PC-3 (cell line): ENCODE measurements at regions of chr5 and their contacts with region 1.

Region 1: GRCh38 chr5:119411935-119412602 is 40.2 kb upstream of the HSD17B4 start:
- DNase-seq: peak; percentile 78
- ATAC-seq: peak; percentile 89
- H3K4me3 ChIP-seq: peak overlapping the region; percentile 68
- H3K27ac ChIP-seq: peak overlapping the region; percentile 69
- H3K4me1 ChIP-seq: peaks cover 20% of the 10 kb centered on the region
- H3K27me3 ChIP-seq: no peaks in the 10 kb centered on the region
- CTCF ChIP-seq: peak; percentile 92

Region 2: GRCh38 chr5:118987988-118988865 is 423.8 kb before region 1 on chr5 and contains the start of gene DTWD2:
- CTCF ChIA-PET with region 1: interaction called, 4 read pairs
- POLR2A ChIA-PET with region 1: no interaction called
- intact Hi-C with region 1: loop called (anchors 1 kb)
- DNase-seq: peak; percentile 94
- ATAC-seq: peak; percentile 96
- H3K4me3 ChIP-seq: peak within 1 kb of the TSS; percentile 82
- H3K27ac ChIP-seq: peak within 1 kb of the TSS; percentile 73
- H3K4me1 ChIP-seq: peaks cover 24% of the 10 kb centered on the region
- H3K27me3 ChIP-seq: no peaks in the 10 kb centered on the region
- CTCF ChIP-seq: peak; percentile 79
- total RNA-seq, gene DTWD2: 16.5 and 24.4 TPM in 2 replicates

Region 3: GRCh38 chr5:119037501-119038215 is 374.4 kb before region 1 on chr5:
- CTCF ChIA-PET with region 1: no interaction called
- POLR2A ChIA-PET with region 1: no interaction called
- intact Hi-C with region 1: no loop called
- DNase-seq: peak; percentile 54
- ATAC-seq: peak; percentile 58
- H3K4me3 ChIP-seq: no peak overlapping the region
- H3K27ac ChIP-seq: peak overlapping the region; percentile 51
- H3K4me1 ChIP-seq: peaks cover 19% of the 10 kb centered on the region
- H3K27me3 ChIP-seq: no peaks in the 10 kb centered on the region
- CTCF ChIP-seq: no peak

Region 4: GRCh38 chr5:119070828-119071572 is 341.1 kb before region 1 on chr5 and contains the start of gene DMXL1:
- CTCF ChIA-PET with region 1: interaction called, 4 read pairs
- POLR2A ChIA-PET with region 1: no interaction called
- intact Hi-C with region 1: loop called (anchors 2 kb)
- DNase-seq: peak; percentile 97
- ATAC-seq: peak; percentile 88
- H3K4me3 ChIP-seq: peak within 1 kb of the TSS; percentile 98
- H3K27ac ChIP-seq: peak within 1 kb of the TSS; percentile 77
- H3K4me1 ChIP-seq: peaks cover 11% of the 10 kb centered on the region
- H3K27me3 ChIP-seq: no peaks in the 10 kb centered on the region
- CTCF ChIP-seq: no peak
- total RNA-seq, gene DMXL1: 16.0 and 20.6 TPM in 2 replicates

Region 5: DNA sequence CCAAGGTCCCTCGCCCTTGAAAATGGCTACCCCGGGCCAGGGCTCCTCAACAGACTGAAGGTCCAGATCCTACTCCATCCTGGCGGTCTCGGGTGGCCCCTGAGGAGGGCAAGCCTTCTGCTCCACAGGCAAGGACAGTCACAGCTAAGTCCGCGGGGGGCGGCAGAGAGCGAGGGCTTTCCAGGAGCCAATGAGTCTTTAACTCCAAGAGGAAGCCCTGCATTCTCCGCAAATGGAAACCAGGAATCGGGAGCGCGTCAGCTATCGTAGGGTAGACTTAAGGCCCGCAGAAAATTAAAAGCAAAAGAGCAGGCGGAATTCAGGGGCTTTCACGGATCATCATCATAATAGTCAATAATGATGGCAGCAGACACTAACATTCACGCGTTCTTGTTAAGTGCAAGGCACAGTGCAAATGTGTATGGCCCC is 144.1 kb before region 1 on chr5:
- CTCF ChIA-PET with region 1: no interaction called
- POLR2A ChIA-PET with region 1: no interaction called
- intact Hi-C with region 1: loop called (anchors 2 kb)
- DNase-seq: peak; percentile 90
- ATAC-seq: peak; percentile 77
- H3K4me3 ChIP-seq: peak overlapping the region; percentile 93
- H3K27ac ChIP-seq: peak overlapping the region; percentile 75
- H3K4me1 ChIP-seq: peaks cover 33% of the 10 kb centered on the region
- H3K27me3 ChIP-seq: no peaks in the 10 kb centered on the region
- CTCF ChIP-seq: no peak

Region 6: DNA sequence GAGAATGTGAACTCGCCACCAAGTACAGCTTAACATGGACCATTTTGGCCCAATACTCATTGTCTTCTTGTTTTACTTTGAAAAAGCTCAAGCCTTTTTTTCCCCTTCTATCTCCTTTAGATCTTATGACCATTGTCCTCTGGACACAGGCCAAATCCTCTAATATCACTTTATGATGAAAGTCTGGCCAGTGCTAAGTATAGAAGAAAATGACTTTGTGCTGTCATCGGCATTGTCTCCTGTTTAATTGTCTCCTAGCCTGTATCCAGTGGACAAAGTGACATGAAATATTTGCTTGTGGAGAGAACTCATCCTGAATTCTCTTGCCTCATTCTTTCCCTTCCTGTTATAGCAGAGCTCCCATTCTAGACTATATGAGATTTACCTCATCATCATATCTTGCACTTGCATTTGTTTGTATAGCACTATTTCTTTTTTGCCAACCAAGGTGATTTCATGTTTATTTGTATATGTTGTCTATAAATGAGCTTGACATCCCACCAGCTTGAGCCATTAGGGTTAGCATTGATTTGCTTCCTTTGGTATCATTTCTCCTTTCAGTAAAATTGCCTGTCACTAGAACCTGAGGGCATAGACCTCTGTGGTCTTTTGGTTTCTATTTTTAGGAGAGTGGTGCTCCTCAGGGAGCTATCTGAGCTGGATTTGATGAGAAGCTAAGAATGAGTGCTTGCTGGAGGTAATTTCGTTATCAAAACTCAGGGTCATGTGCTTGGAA is 75.1 kb before region 1 on chr5:
- CTCF ChIA-PET with region 1: interaction called, 3 read pairs
- POLR2A ChIA-PET with region 1: no interaction called
- intact Hi-C with region 1: loop called (anchors 5 kb)
- DNase-seq: no peak
- ATAC-seq: no peak
- H3K4me3 ChIP-seq: no peak overlapping the region
- H3K27ac ChIP-seq: no peak overlapping the region
- H3K4me1 ChIP-seq: peaks cover 3% of the 10 kb centered on the region; the same call in 1 of the 2 replicates
- H3K27me3 ChIP-seq: no peaks in the 10 kb centered on the region
- CTCF ChIP-seq: no peak

Region 7: GRCh38 chr5:119743927-119744326 is 331.9 kb after region 1 on chr5:
- CTCF ChIA-PET with region 1: no interaction called
- POLR2A ChIA-PET with region 1: no interaction called
- intact Hi-C with region 1: loop called (anchors 5 kb)
- DNase-seq: peak; percentile 65
- ATAC-seq: peak; percentile 62
- H3K4me3 ChIP-seq: no peak overlapping the region
- H3K27ac ChIP-seq: no peak overlapping the region
- H3K4me1 ChIP-seq: peaks cover 3% of the 10 kb centered on the region; the same call in 1 of the 2 replicates
- H3K27me3 ChIP-seq: no peaks in the 10 kb centered on the region
- CTCF ChIP-seq: peak; percentile 70